ENCODE measurements at regions of chr17 and their contacts with region 1.

Region 1: DNA sequence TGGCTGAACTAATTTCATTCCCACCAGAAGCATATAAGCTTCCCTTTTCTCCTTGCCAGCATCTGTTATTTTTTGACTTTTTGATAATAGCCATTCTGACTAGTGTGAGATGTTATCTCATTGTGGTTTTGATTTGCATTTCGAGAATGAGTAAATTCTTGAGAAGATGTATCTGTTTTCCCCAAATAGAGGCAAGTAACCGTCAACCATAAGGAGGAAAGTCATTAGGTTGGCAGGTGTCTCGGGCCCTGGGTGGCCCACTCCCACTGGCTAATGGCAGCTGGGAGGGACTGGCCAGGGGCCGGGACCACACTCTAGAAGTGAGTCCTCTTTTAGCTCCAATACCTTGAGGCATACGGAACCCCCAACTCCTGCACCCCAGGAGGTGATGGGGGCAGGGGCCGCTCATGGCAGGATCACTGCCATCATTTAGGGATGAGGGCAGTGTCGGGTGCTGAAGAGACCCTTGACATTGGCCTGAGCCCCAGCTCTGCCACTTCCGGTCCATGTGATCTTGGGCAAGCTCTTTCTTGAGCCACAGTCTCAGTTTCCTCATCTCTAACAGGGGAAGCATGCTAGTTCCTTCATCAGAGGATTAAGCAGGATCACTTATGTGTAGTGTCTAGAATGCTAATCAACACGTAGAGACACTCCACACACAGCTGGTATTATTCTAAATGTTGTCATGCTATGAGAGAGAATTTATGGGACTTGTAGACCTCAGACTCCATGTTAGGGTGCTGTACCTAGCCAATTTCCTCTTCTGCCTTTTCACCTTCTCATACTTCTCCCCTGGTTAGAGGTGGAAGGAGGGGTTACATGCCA is 44.3 kb downstream of the RGS9 start:
- DNase-seq: peak; percentile 69
- H3K4me3 Mint-ChIP-seq: peak overlapping the region; percentile 29
- H3K27ac Mint-ChIP-seq: peak overlapping the region; percentile 98
- H3K4me1 Mint-ChIP-seq: peaks cover 88% of the 10 kb centered on the region
- H3K27me3 Mint-ChIP-seq: no peaks in the 10 kb centered on the region

Region 2: DNA sequence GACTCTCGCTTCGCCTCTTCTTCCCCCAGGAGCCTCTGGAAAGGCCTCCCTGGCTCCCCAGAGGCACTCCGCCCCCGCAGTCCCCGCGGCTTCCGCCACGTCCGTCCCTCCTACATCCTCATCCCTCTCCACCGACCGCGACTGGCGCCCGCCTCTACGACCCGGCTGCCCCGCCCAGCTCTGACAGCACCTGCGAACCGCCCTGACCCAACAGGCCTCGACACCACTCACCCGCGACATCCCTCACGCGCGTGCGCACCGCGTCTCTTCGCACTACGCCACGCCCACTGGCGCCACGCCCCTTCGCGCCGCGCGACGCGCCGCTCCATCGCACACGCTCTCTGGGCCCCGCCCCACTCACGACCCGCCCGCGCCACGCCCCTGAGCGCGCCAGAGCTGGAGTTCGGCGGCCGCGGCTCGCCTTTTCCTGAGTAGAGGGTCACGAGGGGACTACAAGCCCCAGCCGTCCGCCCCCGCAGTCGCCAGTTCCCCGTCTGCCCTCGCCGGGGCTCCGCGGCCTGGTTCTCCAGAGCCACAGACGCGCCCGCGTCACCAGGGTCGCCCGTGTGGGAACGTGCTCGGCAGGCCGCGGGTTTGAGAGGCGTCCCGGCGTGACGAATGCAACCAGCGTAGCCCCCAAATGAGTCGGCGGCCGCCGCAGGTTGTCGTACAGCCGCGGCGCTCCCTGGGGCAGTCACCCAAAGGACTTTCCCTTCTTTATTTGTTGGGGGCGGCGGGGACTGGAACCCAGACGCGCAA is 205.9 kb before region 1 on chr17:
- CTCF ChIA-PET with region 1: interaction called, 4 read pairs
- POLR2A ChIA-PET with region 1: interaction called, 39 read pairs
- DNase-seq: peak; percentile 98
- H3K4me3 Mint-ChIP-seq: peak overlapping the region; percentile 84
- H3K27ac Mint-ChIP-seq: peak overlapping the region; percentile 94
- H3K4me1 Mint-ChIP-seq: peaks cover 59% of the 10 kb centered on the region
- H3K27me3 Mint-ChIP-seq: no peaks in the 10 kb centered on the region

Region 3: GRCh38 chr17:65122836-65123756 is 58.4 kb before region 1 on chr17:
- CTCF ChIA-PET with region 1: interaction called, 4 read pairs
- POLR2A ChIA-PET with region 1: interaction called, 44 read pairs
- DNase-seq: peak; percentile 89
- H3K4me3 Mint-ChIP-seq: peak overlapping the region; percentile 75
- H3K27ac Mint-ChIP-seq: peak overlapping the region; percentile 97
- H3K4me1 Mint-ChIP-seq: peaks cover 48% of the 10 kb centered on the region
- H3K27me3 Mint-ChIP-seq: peaks cover 11% of the 10 kb centered on the region

Region 4: DNA sequence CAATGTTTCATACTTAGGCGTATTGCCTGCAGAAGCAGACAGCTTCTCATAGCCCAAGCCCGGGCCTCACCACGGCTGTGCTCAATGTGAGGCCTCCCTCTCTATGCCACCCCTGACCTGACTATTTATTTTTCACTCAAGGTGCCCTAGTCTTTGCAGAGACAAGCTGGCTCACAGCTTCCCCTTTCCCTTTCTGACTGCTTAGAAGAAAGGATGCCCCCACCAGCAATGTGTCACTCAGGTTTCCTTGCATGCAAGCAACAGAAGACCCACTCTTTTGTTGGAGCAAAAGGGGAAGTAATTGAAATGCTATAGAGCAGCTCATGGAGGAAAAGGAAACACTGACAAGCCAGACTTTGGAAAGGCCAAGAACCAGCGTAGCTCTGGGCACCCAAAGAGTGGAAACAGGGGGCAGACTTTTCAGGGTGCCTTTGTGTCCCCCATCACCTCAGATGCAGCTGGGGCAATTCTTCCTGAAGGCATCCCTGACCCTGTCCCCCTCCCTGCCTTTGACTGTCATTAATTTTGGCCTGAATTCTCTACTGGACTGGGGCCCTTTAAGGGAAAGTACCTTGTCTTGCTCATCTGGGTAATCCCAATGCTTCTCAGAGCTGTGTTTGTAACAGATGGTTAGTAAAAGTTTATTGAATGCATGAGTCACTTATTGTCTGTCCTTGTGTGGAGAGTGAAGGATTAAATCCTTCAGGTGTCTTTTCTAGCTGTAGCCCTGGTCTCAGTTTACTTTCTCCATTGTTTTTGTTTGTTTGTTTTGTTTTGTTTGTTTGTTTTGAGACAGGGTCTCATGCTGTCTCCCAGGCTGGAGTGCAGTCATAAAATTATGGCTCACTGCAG is 26.5 kb before region 1 on chr17:
- CTCF ChIA-PET with region 1: interaction called, 3 read pairs
- POLR2A ChIA-PET with region 1: interaction called, 10 read pairs
- DNase-seq: no peak
- H3K4me3 Mint-ChIP-seq: no peak overlapping the region
- H3K27ac Mint-ChIP-seq: peak overlapping the region; percentile 51
- H3K4me1 Mint-ChIP-seq: peaks cover 22% of the 10 kb centered on the region
- H3K27me3 Mint-ChIP-seq: no peaks in the 10 kb centered on the region

Region 5: DNA sequence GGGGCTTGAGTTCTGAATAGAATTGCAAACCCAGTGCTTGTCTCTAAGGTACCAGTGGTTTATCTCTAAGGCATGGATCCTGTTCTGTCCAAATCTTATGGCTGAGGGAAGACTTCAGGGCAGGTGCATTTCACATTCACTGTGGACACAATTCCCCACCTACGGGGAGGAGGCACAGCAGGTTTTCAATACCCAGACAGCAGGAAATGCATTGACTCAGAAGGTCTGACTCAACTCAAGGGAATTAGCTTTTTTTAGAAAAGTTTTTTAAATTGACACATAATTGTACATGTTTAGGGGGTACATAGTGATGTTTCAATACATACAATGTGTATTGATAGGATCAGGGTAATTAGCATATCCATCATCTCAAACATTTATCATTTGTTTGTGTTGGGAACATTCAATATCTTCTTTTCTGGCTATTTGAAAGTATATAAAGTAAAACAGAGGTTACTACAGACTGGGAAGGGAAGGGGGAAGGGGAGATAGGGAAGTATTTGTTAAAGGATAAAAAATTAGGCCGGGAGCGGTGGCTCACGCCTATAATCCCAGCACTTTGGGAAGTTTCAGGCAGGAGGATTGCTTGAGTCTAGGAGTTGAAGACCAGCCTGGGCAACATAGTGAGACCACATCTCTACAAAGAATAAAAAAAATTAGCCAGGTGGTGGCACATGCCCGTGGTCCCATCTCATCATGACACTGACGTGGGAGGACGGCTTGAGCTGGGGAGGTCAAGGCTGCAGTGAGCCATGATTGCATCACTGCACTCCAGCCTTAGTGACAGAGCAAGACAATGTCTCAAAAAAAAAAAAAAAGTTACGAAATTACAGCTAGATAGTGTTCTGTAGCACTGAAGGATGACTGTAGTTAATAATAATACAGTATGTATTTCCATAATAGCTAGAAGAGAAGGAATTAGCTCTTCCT is 10.6 kb after region 1 on chr17:
- CTCF ChIA-PET with region 1: interaction called, 13 read pairs
- POLR2A ChIA-PET with region 1: interaction called, 30 read pairs
- DNase-seq: no peak
- H3K4me3 Mint-ChIP-seq: no peak overlapping the region
- H3K27ac Mint-ChIP-seq: peak overlapping the region; percentile 3
- H3K4me1 Mint-ChIP-seq: peaks cover 53% of the 10 kb centered on the region
- H3K27me3 Mint-ChIP-seq: no peaks in the 10 kb centered on the region